IMR-90 (cell line): ENCODE measurements at regions of chr4 and their contacts with region 1.

Region 1: GRCh38 chr4:67651536-67651935 is 49.4 kb downstream of the UBA6 start:
- DNase-seq: no peak
- ATAC-seq: no peak
- H3K4me3 ChIP-seq: no peak overlapping the region
- H3K27ac ChIP-seq: no peak overlapping the region
- H3K4me1 ChIP-seq: no peaks in the 10 kb centered on the region
- H3K27me3 ChIP-seq: no peaks in the 10 kb centered on the region
- CTCF ChIP-seq: no peak
- POLR2A ChIP-seq: no peak
- RAD21 ChIP-seq: no peak

Region 2: GRCh38 chr4:66613591-66613990 is 1037.9 kb before region 1 on chr4:
- CTCF ChIA-PET with region 1: no interaction called
- POLR2A ChIA-PET with region 1: no interaction called
- dilution Hi-C with region 1: no loop called
- in situ Hi-C with region 1: no loop called
- intact Hi-C with region 1: loop called (anchors 5 kb)
- DNase-seq: no peak
- ATAC-seq: no peak
- H3K4me3 ChIP-seq: no peak overlapping the region
- H3K27ac ChIP-seq: no peak overlapping the region
- H3K4me1 ChIP-seq: no peaks in the 10 kb centered on the region
- H3K27me3 ChIP-seq: no peaks in the 10 kb centered on the region
- CTCF ChIP-seq: no peak
- POLR2A ChIP-seq: no peak
- RAD21 ChIP-seq: no peak

Region 3: DNA sequence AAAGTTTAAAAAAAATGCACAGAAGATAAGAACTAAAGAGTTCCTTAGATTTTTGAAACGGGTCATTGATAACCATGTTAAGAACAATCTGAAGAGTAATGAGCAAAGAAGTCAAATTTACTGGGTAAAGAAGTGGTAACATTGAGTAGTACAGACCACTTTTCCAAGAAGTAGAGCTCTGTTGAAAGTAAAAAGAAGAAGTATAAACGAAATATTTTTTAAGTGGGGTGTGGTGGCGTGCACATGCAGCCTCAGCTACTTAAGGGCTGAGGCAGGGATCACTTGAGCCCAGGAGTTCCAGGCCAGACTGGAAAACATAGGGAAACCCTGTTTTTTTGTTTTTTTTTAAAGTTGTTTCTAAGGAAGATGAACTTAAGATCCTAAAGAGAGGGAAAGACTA is 19.0 kb before region 1 on chr4:
- CTCF ChIA-PET with region 1: no interaction called
- POLR2A ChIA-PET with region 1: no interaction called
- dilution Hi-C with region 1: no loop called
- in situ Hi-C with region 1: no loop called
- intact Hi-C with region 1: no loop called
- DNase-seq: no peak
- ATAC-seq: no peak
- H3K4me3 ChIP-seq: no peak overlapping the region
- H3K27ac ChIP-seq: no peak overlapping the region
- H3K4me1 ChIP-seq: no peaks in the 10 kb centered on the region
- H3K27me3 ChIP-seq: no peaks in the 10 kb centered on the region
- CTCF ChIP-seq: no peak
- POLR2A ChIP-seq: no peak
- RAD21 ChIP-seq: no peak

Region 4: GRCh38 chr4:68271851-68272756 is 620.6 kb after region 1 on chr4:
- CTCF ChIA-PET with region 1: no interaction called
- POLR2A ChIA-PET with region 1: no interaction called
- dilution Hi-C with region 1: no loop called
- in situ Hi-C with region 1: no loop called
- intact Hi-C with region 1: no loop called
- DNase-seq: peak; percentile 73
- ATAC-seq: peak; percentile 87
- H3K4me3 ChIP-seq: peak overlapping the region; percentile 54
- H3K27ac ChIP-seq: no peak overlapping the region
- H3K4me1 ChIP-seq: 0 out of 2 replicates have a peak, but pooled peaks cover 3% of the 10 kb centered on the region
- H3K27me3 ChIP-seq: no peaks in the 10 kb centered on the region
- CTCF ChIP-seq: peak; percentile 77
- POLR2A ChIP-seq: no peak
- RAD21 ChIP-seq: peak; percentile 67